Naive thymus-derived CD4-positive, alpha-beta T cell (primary cell): ENCODE measurements at regions of chr2 and their contacts with region 1.

Region 1: DNA sequence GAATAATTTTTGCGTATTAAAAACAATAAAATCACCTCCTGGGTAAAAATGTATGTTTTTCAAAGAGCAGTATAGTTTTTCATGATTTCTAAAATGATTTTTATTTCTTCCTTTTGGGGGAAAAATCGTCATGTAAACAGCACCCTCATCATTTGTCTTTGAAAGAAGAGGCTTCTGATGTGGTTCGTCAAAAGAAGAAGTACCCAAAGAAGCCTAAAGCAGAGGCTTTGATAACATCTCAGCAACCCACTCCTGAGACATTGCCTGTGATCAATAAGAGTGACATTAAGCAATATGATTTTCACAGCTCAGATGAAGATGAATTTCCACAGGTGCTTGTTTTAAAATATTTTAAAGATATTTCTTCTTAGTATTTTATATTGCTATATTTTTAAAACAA is 110.2 kb upstream of the KIF5C start:
- DNase-seq: peak in 7 of 9 donors; percentile 33 to 64 (median 47)
- ATAC-seq: peak; percentile 92
- H3K4me3 ChIP-seq: no peak overlapping the region
- H3K4me3 Mint-ChIP-seq: peak overlapping the region in 7 of 10 donors; percentile 37 to 73 (median 64)
- H3K27ac ChIP-seq: no peak overlapping the region
- H3K27ac Mint-ChIP-seq: peak overlapping the region in 5 of 9 donors; percentile 26 to 72 (median 57)
- H3K4me1 ChIP-seq: peaks cover 0 to 12% of the 10 kb centered on the region in 2 donors
- H3K4me1 Mint-ChIP-seq: peaks cover 6 to 70% (median 53%) of the 10 kb centered on the region in 7 donors
- H3K27me3 ChIP-seq: no peaks in the 10 kb centered on the region
- H3K27me3 Mint-ChIP-seq: no peaks in the 10 kb centered on the region

Region 2: GRCh38 chr2:148552675-148553331 is 212.0 kb before region 1 on chr2:
- CTCF ChIA-PET with region 1: no interaction called
- POLR2A ChIA-PET with region 1: no interaction called
- intact Hi-C with region 1: loop called in 1 of 2 experiments (anchors 10 kb)
- DNase-seq: peak in 7 of 9 donors; percentile 18 to 64 (median 53)
- ATAC-seq: peak; percentile 77
- H3K4me3 ChIP-seq: peak overlapping the region; percentile 75
- H3K4me3 Mint-ChIP-seq: no peak overlapping the region
- H3K27ac ChIP-seq: peak overlapping the region; percentile 70
- H3K27ac Mint-ChIP-seq: no peak overlapping the region
- H3K4me1 ChIP-seq: peaks cover 5 to 12% of the 10 kb centered on the region in 2 donors
- H3K4me1 Mint-ChIP-seq: peaks cover 1 to 13% (median 7%) of the 10 kb centered on the region in 7 donors
- H3K27me3 ChIP-seq: no peaks in the 10 kb centered on the region
- H3K27me3 Mint-ChIP-seq: no peaks in the 10 kb centered on the region

Region 3: DNA sequence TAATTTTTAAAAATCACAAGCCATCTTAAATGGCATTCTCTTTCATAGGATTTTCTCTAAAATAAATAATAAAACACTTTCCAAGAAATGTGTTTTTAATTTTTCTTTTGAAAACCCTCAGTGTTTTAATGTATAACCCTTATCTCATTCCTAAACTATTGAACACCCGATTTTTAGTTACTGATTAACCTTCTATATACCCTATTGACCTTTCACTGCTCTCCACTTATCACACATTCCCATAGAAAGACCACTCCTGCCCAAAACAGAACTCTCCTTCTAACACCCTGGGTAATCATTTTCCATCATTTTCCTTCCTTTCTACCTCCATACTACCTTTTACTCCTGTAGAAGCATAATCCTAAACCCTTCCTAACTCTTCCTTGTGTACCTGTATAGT is 17.8 kb before region 1 on chr2:
- CTCF ChIA-PET with region 1: no interaction called
- POLR2A ChIA-PET with region 1: interaction called, 3 read pairs
- intact Hi-C with region 1: loop called in 1 of 2 experiments (anchors 2 kb)
- DNase-seq: no peak
- ATAC-seq: no peak
- H3K4me3 ChIP-seq: no peak overlapping the region
- H3K4me3 Mint-ChIP-seq: peak overlapping the region in 2 of 10 donors; percentile 3 to 16
- H3K27ac ChIP-seq: no peak overlapping the region
- H3K27ac Mint-ChIP-seq: peak overlapping the region in 3 of 9 donors; percentile 1 to 67 (median 28)
- H3K4me1 ChIP-seq: peaks cover 0 to 7% of the 10 kb centered on the region in 2 donors
- H3K4me1 Mint-ChIP-seq: peaks cover 14 to 81% (median 68%) of the 10 kb centered on the region in 7 donors
- H3K27me3 ChIP-seq: no peaks in the 10 kb centered on the region
- H3K27me3 Mint-ChIP-seq: no peaks in the 10 kb centered on the region

Region 4: GRCh38 chr2:148781544-148781943 is 16.7 kb after region 1 on chr2:
- CTCF ChIA-PET with region 1: no interaction called
- POLR2A ChIA-PET with region 1: interaction called, 3 read pairs
- intact Hi-C with region 1: loop called in 1 of 2 experiments (anchors 2 kb)
- DNase-seq: no peak
- ATAC-seq: no peak
- H3K4me3 ChIP-seq: no peak overlapping the region
- H3K4me3 Mint-ChIP-seq: no peak overlapping the region
- H3K27ac ChIP-seq: no peak overlapping the region
- H3K27ac Mint-ChIP-seq: peak overlapping the region in 2 of 9 donors; percentile 32 to 64
- H3K4me1 ChIP-seq: no peaks in the 10 kb centered on the region
- H3K4me1 Mint-ChIP-seq: peaks cover under 1 to 27% (median 9%) of the 10 kb centered on the region in 7 donors
- H3K27me3 ChIP-seq: no peaks in the 10 kb centered on the region
- H3K27me3 Mint-ChIP-seq: no peaks in the 10 kb centered on the region

Region 5: GRCh38 chr2:148789059-148789458 is 24.2 kb after region 1 on chr2:
- CTCF ChIA-PET with region 1: no interaction called
- POLR2A ChIA-PET with region 1: no interaction called
- intact Hi-C with region 1: loop called in 1 of 2 experiments (anchors 2 kb)
- DNase-seq: no peak
- ATAC-seq: no peak
- H3K4me3 ChIP-seq: no peak overlapping the region
- H3K4me3 Mint-ChIP-seq: no peak overlapping the region
- H3K27ac ChIP-seq: no peak overlapping the region
- H3K27ac Mint-ChIP-seq: no peak overlapping the region
- H3K4me1 ChIP-seq: no peaks in the 10 kb centered on the region
- H3K4me1 Mint-ChIP-seq: peaks cover 0 to 9% (median 6%) of the 10 kb centered on the region in 7 donors
- H3K27me3 ChIP-seq: no peaks in the 10 kb centered on the region
- H3K27me3 Mint-ChIP-seq: no peaks in the 10 kb centered on the region